ENCODE measurements at regions of chr11 and their contacts with region 1.

Region 1: DNA sequence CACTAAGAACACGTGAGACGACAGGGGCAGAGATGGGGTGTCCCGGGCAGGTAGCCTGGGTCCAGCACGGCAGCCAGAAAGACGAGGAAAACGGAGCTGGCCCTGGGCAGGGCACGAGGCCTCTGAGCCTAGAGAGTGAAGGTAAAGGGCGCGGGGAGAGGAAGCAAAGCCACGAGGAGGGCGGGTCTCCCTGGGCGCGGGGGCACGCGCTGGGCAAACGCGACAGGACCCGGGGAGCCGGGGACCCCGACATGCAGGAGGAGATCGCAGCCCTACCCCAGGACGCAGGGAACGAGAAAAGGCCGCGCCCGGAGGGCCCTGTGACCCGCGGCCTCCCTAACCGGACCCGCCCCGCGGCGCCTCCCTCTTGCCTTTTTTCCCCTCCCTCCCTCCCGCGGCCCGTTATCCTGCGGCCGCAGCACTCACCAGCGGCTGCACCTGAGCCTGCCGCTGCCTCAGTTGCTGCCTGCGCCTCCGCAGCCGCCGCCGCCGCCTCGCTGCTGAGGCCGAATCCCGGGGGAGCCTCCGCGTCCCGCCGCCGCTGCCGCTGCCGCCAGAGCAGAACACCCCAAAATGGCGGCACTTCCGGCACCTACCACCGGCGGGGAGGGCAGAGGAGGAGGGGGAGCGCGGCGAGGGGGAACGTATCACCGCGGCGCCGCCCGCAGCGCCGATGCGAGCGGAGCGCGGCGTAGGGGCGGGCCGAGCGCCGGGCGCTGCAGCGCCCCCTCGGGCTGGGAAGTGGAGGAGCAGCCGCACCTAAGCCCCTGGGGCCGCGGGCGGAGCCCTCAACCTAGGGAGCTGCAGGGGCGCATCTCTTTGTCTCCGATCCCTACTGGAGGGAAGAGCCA is at the start of gene CELF1:
- DNase-seq: peak; percentile 77
- H3K27ac ChIP-seq: peak within 1 kb of the TSS; percentile 91
- CTCF ChIP-seq: peak; percentile 96

Region 2: GRCh38 chr11:47201015-47201414 is 351.8 kb before region 1 on chr11:
- CTCF ChIA-PET with region 1: no interaction called
- POLR2A ChIA-PET with region 1: no interaction called
- DNase-seq: no peak
- H3K27ac ChIP-seq: no peak overlapping the region
- CTCF ChIP-seq: no peak

Region 3: GRCh38 chr11:47411884-47412746 is 140.7 kb before region 1 on chr11:
- CTCF ChIA-PET with region 1: no interaction called
- POLR2A ChIA-PET with region 1: no interaction called
- DNase-seq: no peak
- H3K27ac ChIP-seq: peak overlapping the region; percentile 97
- CTCF ChIP-seq: peak; percentile 67

Region 4: DNA sequence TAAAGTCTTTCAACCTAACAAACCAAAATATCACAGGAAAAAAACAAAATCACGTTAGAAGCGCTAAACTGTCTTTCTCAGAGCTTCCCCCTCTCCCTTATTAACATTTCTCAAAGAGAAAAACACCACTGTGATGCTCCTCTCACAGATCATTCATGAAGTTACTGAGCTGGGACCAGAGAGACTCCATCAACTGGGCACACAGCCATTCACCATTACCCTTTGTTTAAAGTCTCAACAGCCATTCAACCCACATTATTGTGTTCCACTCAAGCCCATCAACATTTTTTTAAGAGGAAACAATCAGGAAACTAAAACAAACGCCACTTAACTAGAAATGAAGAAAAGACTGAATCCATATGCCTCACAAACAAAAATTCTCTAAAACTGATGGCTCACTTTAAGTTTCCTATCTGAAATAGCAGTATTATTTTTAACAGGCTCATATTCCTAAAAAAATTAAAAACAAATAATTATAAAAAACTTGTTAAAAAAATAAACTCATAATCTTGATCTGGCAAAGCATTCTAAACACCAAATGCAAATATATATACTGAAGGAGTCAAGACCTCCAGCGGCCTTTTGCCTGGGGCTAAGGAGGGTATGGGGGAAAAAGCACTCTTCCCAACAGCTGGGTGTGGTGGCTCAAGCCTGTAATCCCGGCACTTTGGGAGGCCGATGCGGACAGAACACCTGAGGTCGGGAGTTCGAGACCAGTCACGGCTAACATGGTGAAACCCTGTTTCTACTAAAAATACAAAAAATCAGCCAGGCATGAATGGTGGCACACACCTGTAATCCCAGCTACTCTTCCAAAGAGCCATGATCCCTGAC is 13.8 kb before region 1 on chr11:
- CTCF ChIA-PET with region 1: interaction called, 11 read pairs
- POLR2A ChIA-PET with region 1: no interaction called
- DNase-seq: no peak
- H3K27ac ChIP-seq: peak overlapping the region; percentile 90
- CTCF ChIP-seq: no peak

Region 5: GRCh38 chr11:47583844-47584243 is 31.1 kb after region 1 on chr11:
- CTCF ChIA-PET with region 1: no interaction called
- POLR2A ChIA-PET with region 1: no interaction called
- DNase-seq: no peak
- H3K27ac ChIP-seq: no peak overlapping the region
- CTCF ChIP-seq: no peak

Measured in RWPE1 (cell line).